Astrocyte of the cerebellum (primary cell): ENCODE measurements at regions of chr1 and their contacts with region 1.

Region 1: GRCh38 chr1:43763497-43763973 is 56.2 kb downstream of the ST3GAL3 start:
- DNase-seq: peak; percentile 89
- H3K4me3 ChIP-seq: no peak overlapping the region
- CTCF ChIP-seq: peak; percentile 80

Region 2: DNA sequence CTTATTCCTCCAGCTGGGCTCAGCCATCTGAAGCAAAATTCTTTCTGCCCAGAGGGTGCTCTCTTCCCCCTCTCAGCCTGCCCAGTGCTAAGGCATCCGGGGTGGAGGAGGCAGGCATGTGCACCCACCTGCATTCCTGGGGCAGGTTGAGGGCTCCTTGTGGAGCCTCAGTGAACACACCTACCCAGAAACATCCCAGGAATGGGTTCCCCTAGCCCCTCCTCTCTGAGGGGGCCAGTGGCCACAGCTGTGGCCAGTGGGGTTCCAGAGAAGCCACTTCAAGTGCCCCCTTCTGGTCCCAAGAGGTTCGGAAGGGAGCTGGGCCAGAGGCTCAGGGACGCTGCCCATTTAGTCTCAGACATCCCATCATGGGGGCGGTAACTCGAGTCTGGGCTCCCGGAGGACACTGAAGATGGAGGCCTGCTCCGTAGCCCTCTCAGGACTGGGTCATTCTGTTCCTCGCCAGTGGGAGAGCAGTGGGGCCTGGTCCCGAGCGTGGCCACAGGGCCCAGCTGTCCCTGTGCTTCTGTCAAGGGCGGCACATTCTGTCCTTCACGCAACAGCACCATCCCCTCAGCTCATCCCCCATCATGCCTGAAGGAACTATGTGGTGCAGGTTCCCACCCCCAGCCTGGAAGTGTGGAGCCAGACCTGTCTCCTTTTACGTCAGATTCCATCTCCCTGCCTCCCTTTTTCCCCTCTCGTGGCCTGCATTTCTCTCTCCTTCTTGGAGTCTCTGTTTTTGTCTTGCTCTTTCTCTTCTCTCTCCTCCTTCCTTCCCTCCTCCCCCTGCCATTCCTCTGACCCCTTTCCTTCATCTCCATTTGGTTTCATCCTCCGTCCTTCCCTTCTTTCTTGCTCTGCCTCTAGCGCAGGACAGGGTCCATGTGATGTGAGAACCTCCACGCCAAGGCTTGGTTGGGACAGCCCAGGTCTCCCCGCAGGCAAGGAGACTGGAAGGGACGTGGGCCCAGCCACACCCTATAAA is 163.2 kb before region 1 on chr1:
- in situ Hi-C with region 1: no loop called
- DNase-seq: no peak
- H3K4me3 ChIP-seq: no peak overlapping the region
- CTCF ChIP-seq: no peak

Region 3: DNA sequence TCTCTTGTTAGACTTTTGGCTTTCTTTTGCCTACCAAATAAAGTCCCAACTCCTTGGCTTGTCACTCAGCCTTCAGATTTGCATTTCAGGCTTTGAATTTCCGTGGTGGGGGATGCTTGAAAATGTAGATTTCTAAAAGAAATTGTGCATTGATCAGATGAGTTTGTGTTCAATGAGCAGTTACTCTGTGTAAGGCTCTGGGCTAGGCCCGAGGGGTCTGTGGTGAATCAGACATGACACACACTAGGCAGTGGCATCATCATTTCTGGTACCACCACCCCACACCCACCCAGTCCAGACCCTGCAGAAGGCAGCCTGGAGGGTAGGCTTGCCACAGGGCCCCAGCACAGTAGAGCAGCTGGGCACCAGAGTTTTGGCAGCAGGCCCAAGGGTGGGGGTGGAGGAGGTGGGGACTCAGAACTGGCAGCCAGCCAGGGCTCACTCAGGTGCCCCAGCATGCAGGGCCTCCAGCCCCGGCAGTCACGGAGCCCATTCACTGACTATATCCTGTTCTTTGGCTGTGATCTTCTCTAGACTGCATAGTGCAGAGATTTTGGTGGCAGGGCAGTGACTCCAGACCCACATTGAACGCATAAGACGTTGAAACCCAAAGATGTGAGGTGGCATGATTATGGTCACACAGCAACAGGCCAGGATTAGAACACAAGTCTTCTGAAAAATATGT is 72.9 kb after region 1 on chr1:
- in situ Hi-C with region 1: loop called (anchors 5 kb)
- DNase-seq: no peak
- H3K4me3 ChIP-seq: no peak overlapping the region
- CTCF ChIP-seq: no peak

Region 4: DNA sequence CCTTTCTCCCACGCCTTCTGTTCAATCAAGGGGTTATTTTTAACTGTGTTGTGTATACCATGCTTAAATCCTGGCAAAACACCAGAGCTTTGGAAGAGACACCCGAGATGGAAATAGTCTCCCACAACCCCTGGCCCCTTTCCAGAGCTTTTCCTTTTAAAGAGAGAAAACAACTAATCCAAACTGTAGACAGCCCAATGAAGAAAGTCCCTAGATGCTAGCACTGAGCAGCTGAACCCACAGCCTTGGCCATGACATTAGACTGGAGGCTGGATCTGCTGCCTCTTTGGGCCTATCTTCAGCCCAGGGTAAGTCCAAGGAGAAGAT is 105.2 kb after region 1 on chr1:
- in situ Hi-C with region 1: loop called (anchors 10 kb)
- DNase-seq: peak; percentile 82
- H3K4me3 ChIP-seq: no peak overlapping the region
- CTCF ChIP-seq: no peak

Region 5: GRCh38 chr1:43936431-43937151 is 173.1 kb after region 1 on chr1:
- in situ Hi-C with region 1: loop called (anchors 5 kb)
- DNase-seq: no peak
- H3K4me3 ChIP-seq: peak overlapping the region; percentile 31
- CTCF ChIP-seq: peak; percentile 38

Region 6: GRCh38 chr1:43974443-43975248 is 211.1 kb after region 1 on chr1 and contains the start of gene ATP6V0B:
- in situ Hi-C with region 1: loop called (anchors 5 kb)
- DNase-seq: peak; percentile 80
- H3K4me3 ChIP-seq: peak within 1 kb of the TSS; percentile 95
- CTCF ChIP-seq: no peak

Region 7: GRCh38 chr1:43991476-43992231 is 228.1 kb after region 1 on chr1 and contains the start of gene CCDC24:
- in situ Hi-C with region 1: loop called (anchors 5 kb)
- DNase-seq: peak; percentile 15
- H3K4me3 ChIP-seq: peak within 1 kb of the TSS; percentile 52
- CTCF ChIP-seq: no peak

Region 8: DNA sequence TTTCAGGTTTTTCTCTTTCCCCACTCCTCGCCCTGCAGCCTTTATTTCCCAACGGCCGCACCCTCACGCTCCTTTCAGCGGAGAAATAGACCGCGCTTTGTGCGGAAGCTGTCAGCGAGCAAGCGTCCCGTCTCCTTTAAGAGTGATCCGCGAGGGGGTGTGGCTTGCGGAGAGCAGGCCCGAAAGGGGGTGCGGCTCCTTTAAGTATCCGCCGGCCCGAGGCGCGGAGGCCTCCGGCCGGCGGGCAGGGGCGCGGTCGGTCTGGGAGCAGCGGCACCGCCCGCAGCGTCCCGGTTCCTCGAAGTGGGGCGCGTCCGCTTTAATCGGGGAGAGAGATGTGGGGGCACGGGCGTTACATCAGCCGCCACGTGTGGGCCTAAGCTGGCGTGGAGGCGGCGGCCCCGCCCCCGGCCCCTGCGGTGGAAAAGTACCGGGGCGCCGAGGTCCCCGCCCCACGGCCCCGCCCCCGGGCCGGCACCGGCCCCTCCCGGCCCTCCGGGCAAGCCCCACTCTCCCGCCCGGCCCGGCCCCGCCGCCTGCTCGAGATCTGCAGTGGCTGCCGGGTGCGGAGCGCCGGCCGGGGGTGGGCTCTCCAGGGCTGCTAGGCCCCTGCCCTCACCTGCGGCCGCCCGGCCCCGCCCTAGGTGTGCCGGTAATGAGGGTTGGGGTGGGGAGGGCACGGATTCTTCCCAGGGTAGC is 266.5 kb after region 1 on chr1:
- in situ Hi-C with region 1: loop called (anchors 10 kb)
- DNase-seq: peak; percentile 55
- H3K4me3 ChIP-seq: peak overlapping the region; percentile 72
- CTCF ChIP-seq: no peak